AG04449 (cell line): ENCODE measurements at regions of chr1 and their contacts with region 1.

Region 1: DNA sequence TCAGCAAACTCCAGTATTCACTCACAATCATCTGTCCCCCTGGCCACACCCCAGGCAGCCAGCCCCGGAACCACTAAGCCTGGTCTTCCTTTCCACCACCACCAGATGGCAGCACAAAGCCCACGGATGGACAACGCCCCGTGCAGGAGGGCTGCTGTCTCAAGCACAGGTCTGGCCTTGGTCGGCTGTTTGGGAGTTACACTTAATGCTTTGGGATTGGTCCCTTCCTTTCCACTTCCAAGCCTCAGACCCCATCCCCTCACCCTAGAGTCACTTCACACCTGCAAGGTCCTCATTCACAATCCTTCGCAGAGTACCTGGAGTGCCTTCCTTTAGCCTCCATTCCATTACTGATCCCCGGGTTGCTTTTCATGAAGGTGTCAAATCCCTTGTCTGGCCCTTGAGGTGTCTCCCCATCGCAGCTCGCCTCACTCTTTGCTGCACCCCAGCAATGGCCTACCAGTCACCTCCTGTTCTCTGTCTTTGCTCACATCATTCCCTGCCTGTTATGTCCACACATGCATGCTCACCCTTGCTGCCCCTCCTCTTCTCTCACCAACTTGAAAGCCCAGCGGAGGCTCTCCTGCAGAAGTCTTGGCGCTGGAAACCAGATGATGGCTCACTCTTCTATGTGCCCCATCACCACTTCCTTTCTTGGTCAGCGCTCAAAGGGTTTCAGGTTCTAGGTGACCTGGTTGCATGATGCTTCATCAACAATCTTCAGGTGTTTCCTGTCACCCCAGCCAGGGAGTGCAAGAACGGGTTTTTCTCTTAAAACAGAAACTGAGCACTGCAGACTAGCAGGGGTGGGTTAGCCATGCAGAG is 24.9 kb upstream of the KCNA2 start:
- DNase-seq: no peak
- H3K4me3 ChIP-seq: no peak overlapping the region
- CTCF ChIP-seq: peak; percentile 83

Region 2: DNA sequence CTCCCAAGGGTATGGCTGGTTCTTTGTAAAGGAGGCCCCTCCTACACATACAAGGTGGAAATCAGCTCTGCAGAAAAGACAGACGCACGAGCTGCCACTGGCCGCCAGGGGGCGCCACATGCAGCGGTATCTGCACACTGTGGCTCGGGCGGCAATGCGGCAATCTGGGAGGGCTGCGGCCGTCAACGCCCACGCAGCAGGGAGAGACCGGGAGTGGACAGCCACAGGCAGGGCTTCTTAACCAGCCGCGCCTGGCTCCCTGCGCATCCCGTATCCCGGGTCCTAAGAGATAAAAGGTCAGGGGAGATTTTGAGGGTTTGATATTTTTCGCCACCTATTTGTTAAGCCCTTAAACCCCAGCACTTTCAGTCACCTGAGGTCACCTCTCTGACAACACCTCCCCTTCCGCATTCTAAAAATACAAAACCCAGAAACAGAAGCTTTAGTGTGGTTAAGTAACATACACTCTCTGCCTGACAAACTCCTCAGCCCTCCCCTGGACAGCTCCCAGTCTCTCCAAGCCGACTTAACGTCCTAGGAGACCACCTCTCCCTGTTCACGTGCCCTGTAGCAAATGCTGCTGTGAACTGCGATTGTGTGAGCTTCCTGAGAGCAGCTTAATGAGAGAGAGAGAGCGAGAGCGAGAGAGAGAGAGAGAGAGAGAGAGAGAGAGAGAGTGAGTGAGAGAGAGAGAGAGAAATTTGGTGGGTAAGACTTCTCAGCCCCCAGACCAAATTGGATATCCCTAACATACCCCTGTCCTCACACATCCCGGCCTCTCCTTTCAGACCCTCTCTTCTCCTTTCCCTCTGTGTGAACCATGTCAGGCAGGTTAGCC is 11.4 kb before region 1 on chr1:
- CTCF ChIA-PET with region 1: interaction called, 12 read pairs
- POLR2A ChIA-PET with region 1: no interaction called
- DNase-seq: no peak
- H3K4me3 ChIP-seq: no peak overlapping the region
- CTCF ChIP-seq: peak; percentile 92

Region 3: GRCh38 chr1:110780600-110781484 is 149.8 kb after region 1 on chr1:
- CTCF ChIA-PET with region 1: interaction called, 11 read pairs
- POLR2A ChIA-PET with region 1: no interaction called
- DNase-seq: no peak
- H3K4me3 ChIP-seq: no peak overlapping the region
- CTCF ChIP-seq: peak; percentile 73